ENCODE measurements at regions of chr2 and their contacts with region 1.

Region 1: DNA sequence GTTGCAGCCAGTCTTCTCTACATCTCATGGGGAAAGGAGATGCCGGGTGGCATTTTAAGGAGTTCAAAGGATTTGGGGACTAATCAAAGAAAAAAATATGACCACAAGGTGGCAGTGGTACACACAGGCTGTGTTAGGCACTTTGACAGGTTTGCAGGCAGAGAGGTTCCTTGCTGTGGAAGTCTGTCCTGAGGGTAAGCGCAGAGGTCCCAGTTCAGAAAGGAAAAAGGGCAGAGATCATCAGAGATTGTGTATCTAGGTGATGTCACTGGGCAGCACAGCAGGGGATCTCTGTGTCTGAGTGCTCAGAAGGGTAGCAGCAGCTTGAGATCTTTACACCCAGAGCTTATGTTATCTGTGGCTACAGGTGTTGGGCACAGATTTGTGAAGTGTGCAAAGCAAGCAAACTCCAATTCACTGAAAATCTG is 231.4 kb downstream of the LRRTM1 start:
- DNase-seq: no peak
- ATAC-seq: peak in 1 of 2 donors; percentile 54

Region 2: GRCh38 chr2:80168037-80168436 is 94.9 kb after region 1 on chr2:
- intact Hi-C with region 1: no loop called
- DNase-seq: no peak
- ATAC-seq: no peak

Region 3: GRCh38 chr2:80354858-80355257 is 281.7 kb after region 1 on chr2:
- intact Hi-C with region 1: no loop called
- DNase-seq: no peak
- ATAC-seq: no peak

Region 4: DNA sequence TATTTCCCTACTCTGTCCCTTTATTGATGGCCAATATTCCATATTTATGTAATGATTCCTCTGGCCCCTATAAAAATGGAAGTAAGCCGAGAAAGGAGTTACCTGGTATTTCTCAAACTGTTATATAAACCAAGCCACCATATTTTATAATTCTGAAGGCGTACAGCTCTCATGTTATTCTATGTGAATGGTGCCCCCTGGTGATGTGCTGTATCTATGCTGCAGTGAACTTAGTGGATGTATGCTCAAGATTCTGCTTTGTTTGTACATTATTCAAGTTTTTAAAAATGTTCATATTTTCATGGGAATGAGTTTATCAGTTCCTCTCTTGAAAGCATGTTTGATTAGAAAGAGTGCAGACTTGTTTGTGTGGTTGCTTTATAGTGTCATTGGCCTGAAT is 425.9 kb after region 1 on chr2:
- intact Hi-C with region 1: loop called (anchors 5 kb)
- DNase-seq: peak; percentile 32
- ATAC-seq: peak; percentile 76 to 77